ENCODE measurements at regions of chr20 and their contacts with region 1.

Region 1: GRCh38 chr20:16517946-16518783 is 55.1 kb downstream of the KIF16B start:
- DNase-seq: peak in 1 of 2 donors; percentile 36
- ATAC-seq: peak in 6 of 8 donors; percentile 65 to 74 (median 71)
- H3K4me3 ChIP-seq: no peak overlapping the region
- H3K27ac ChIP-seq: no peak overlapping the region
- H3K4me1 ChIP-seq: peaks cover 0 to 10% (median 0%) of the 10 kb centered on the region in 9 donors
- H3K27me3 ChIP-seq: no peaks in the 10 kb centered on the region
- CTCF ChIP-seq: peak; percentile 12 to 70 (median 60)

Region 2: GRCh38 chr20:16083639-16084280 is 434.4 kb before region 1 on chr20:
- intact Hi-C with region 1: no loop called
- DNase-seq: no peak
- ATAC-seq: no peak
- H3K4me3 ChIP-seq: no peak overlapping the region
- H3K27ac ChIP-seq: no peak overlapping the region
- H3K4me1 ChIP-seq: no peaks in the 10 kb centered on the region
- H3K27me3 ChIP-seq: no peaks in the 10 kb centered on the region
- CTCF ChIP-seq: no peak

Region 3: GRCh38 chr20:16639027-16639941 is 121.1 kb after region 1 on chr20:
- intact Hi-C with region 1: loop called in 3 of 10 experiments (anchors 2 to 5 kb)
- DNase-seq: no peak
- ATAC-seq: no peak
- H3K4me3 ChIP-seq: no peak overlapping the region
- H3K27ac ChIP-seq: no peak overlapping the region
- H3K4me1 ChIP-seq: no peaks in the 10 kb centered on the region
- H3K27me3 ChIP-seq: peaks cover 0 to 3% (median 0%) of the 10 kb centered on the region in 7 donors
- CTCF ChIP-seq: no peak

Region 4: DNA sequence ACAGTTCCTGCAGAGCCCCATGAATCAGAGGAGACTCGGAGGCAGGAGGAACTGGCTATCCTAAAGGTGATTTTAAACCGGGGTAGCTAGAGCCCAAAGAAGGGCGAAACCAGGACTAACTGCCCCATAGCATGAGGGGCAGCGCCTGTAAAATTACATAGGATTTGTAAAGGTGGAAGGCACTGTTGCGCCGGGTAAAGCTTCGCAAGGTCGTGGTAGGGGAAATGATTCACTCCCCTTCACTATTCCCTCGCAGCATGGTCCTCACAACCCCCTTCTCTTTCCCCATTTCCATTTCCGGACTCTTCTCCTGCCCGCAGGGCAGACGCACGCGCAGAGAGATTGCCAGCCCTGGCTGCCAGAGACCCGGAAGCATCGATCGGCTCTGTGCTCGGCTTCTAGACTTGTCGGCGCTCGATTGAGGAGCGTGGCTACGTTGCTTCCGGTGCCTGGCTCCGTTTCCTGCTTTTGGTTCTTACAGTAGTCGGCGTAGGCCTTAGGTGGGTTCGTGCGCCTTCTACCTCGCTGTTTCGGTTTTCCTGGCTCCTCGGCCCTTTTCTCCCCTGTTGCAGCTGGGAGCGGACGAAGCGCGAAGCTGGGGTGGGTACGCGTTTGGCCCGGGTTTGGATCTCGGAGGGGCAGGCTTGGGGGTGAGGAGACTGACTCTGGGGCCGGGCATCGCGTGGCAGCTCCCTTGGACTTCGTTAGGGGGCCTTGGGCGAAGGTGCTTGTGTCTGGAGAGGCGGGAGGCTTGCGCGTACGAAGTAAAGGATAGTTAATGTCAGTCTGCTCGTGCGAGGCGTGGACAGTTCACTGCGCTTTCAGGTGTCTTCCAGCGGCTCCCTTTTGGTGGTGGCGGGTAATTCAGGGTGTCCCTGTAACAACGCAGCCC is 211.6 kb after region 1 on chr20 and contains the start of gene SNRPB2:
- intact Hi-C with region 1: loop called in 1 of 10 experiments (anchors 10 kb)
- DNase-seq: peak; percentile 90 to 94
- ATAC-seq: peak; percentile 98 to 100 (median 99)
- H3K4me3 ChIP-seq: peak within 1 kb of the TSS; percentile 75 to 97 (median 92)
- H3K27ac ChIP-seq: peak within 1 kb of the TSS; percentile 24 to 95 (median 81)
- H3K4me1 ChIP-seq: peaks cover 0 to 26% (median 14%) of the 10 kb centered on the region in 9 donors
- H3K27me3 ChIP-seq: peaks cover 0 to 39% (median 24%) of the 10 kb centered on the region in 7 donors
- CTCF ChIP-seq: peak in 2 of 9 donors; percentile 4 to 8
- total RNA-seq, gene SNRPB2: 28.8 to 40.3 (median 32.2) TPM

Region 5: GRCh38 chr20:16761305-16761829 is 243.2 kb after region 1 on chr20:
- intact Hi-C with region 1: loop called (anchors 5 to 10 kb)
- DNase-seq: peak in 1 of 2 donors; percentile 38
- ATAC-seq: peak in 7 of 8 donors; percentile 55 to 82 (median 75)
- H3K4me3 ChIP-seq: no peak overlapping the region
- H3K27ac ChIP-seq: no peak overlapping the region
- H3K4me1 ChIP-seq: peaks cover 0 to 8% (median 0%) of the 10 kb centered on the region in 9 donors
- H3K27me3 ChIP-seq: peaks cover 0 to 18% (median 7%) of the 10 kb centered on the region in 7 donors
- CTCF ChIP-seq: peak; percentile 36 to 78 (median 70)

Region 6: GRCh38 chr20:16904750-16905149 is 386.6 kb after region 1 on chr20:
- intact Hi-C with region 1: no loop called
- DNase-seq: no peak
- ATAC-seq: no peak
- H3K4me3 ChIP-seq: no peak overlapping the region
- H3K27ac ChIP-seq: no peak overlapping the region
- H3K4me1 ChIP-seq: no peaks in the 10 kb centered on the region
- H3K27me3 ChIP-seq: no peaks in the 10 kb centered on the region
- CTCF ChIP-seq: no peak

Measured in heart right ventricle (tissue), 16 donors.